Activated T-helper 2 cell treated with anti-CD3 and anti-CD28 coated beads, Interferon-gamma antibody, Interleukin-2, Interleukin-4, amounts not matched to agents 10 μg/mL and 5 μg/mL and 100 μg/mL, durations not matched to agents 14 hours and 24 hours and 36 hours (primary cell): ENCODE measurements at regions of chr19 and their contacts with region 1.

Region 1: DNA sequence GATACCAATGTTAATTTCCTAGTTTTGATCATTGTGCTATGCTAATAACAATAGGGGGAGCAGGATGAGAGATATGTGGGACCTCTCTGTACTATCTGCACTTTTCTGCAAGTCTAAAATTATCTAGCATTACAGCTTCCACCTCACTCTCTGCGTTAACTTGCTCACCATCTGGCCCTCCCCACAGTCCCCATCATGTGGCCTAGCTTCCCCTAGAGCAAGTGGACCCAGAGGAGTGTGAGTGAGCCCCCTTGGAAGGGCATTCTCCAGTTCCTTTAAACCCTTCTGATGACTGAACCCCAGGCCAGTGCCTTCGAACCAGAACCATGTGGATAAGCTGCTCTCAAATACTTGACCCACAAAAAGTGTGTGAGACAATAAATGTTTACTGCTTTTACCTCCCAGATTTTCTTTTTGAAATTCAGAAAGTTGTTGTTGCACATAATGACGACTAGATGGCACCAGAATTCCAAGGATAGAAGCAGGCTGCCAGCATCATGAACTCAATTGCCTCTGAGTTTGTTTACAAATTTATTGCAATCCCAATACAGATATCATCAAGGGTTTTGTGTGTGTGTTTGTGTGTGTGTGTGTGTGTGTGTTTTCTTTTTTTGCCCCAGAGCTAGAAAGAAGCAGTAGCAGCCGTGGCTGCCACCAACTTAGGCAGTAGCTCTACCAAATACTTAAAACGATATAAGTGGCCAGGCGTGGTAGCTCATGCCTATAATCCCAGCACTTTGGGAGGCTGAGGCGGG is 49.0 kb upstream of the ZNF780A start:
- DNase-seq: no peak
- H3K4me3 Mint-ChIP-seq: no peak overlapping the region
- H3K27ac Mint-ChIP-seq: no peak overlapping the region
- H3K4me1 Mint-ChIP-seq: peaks cover 9% of the 10 kb centered on the region
- H3K27me3 Mint-ChIP-seq: peaks cover 6% of the 10 kb centered on the region

Region 2: DNA sequence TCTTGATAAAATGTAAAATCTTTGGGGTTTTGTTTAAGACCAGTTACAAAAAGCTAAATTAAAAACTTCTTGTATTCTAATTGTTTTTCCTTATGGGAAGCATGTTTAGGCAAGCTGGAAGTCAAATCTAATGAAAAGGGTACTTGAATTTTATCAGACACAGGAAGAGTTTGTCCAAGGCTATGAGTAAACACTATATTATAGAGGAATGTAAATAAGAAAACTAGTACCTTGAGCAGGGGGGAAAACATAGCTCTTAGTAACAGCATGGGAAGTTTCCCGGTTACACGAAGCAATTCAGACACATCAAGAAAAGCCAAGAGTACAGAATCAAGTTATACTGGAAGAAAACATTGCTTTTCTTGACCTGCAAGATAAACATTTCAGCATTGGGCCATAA is 29.1 kb before region 1 on chr19:
- intact Hi-C with region 1: no loop called
- DNase-seq: no peak
- H3K4me3 Mint-ChIP-seq: no peak overlapping the region
- H3K27ac Mint-ChIP-seq: no peak overlapping the region
- H3K4me1 Mint-ChIP-seq: no peaks in the 10 kb centered on the region
- H3K27me3 Mint-ChIP-seq: no peaks in the 10 kb centered on the region

Region 3: DNA sequence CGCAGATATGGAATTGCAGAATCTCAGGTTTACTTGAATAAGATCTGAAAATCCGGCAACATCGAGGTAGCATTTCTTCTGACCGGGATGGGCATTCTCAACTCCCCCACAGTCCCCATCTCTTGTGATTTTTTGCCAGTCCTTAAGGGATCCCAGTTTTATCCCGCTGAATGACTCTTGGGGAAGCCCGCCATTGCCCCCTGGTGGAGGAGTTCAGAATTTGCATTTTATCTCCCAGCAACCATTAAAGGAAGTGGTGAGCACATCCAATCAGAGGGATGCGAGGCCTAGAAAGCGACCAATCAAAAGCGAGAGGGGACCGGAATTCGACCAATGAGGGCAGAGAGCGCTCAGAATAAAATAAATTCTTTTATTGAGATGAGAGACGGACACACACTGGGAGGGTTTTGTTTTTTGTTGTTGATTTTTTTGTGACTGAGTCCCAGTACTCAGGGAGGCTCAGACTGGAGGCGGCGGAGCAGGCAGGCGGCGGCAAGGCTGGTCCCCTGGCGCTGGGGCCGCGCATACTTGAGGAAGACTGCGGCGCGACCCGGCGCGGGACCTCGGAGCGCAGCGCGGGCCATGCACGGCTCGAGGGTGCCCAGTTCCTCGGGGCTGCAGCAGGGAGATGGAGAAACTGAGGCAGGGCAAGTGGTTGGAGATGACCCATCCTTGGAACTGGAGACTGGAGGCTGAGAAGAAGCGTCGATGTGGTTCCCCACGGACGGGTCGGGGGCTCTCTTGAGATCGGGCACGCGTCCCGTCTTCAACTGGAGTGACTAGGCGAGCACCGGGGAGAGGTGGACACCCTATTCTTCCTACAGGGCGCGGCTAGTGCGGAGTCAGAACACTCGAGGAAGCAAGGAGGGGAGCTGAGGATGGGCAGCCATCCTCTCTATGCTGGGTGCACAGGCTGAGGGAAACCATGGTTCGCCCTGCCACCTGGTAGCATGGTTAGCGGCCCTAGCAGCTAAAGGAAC is 82.4 kb after region 1 on chr19:
- intact Hi-C with region 1: loop called (anchors 1 kb)
- DNase-seq: peak; percentile 67
- H3K4me3 Mint-ChIP-seq: no peak overlapping the region
- H3K27ac Mint-ChIP-seq: no peak overlapping the region
- H3K4me1 Mint-ChIP-seq: peaks cover 12% of the 10 kb centered on the region
- H3K27me3 Mint-ChIP-seq: peaks cover 53% of the 10 kb centered on the region